ENCODE measurements at regions of chr16 and their contacts with region 1.

Region 1: GRCh38 chr16:58629572-58630104 is at the start of gene CNOT1:
- DNase-seq: peak; percentile 92 to 99 (median 97)
- ATAC-seq: peak; percentile 84 to 89 (median 86)
- H3K4me3 ChIP-seq: peak within 1 kb of the TSS; percentile 89 to 97
- H3K4me3 Mint-ChIP-seq: peak within 1 kb of the TSS; percentile 97 to 100 (median 100)
- H3K27ac ChIP-seq: peak within 1 kb of the TSS; percentile 93
- H3K27ac Mint-ChIP-seq: peak within 1 kb of the TSS; percentile 100
- H3K4me1 ChIP-seq: peaks cover 15 to 41% of the 10 kb centered on the region in 2 experiments
- H3K4me1 Mint-ChIP-seq: peaks cover 35 to 38% (median 36%) of the 10 kb centered on the region in 3 donors
- H3K27me3 ChIP-seq: no peaks in the 10 kb centered on the region
- H3K27me3 Mint-ChIP-seq: no peaks in the 10 kb centered on the region
- total RNA-seq, gene CNOT1: 205 to 238 (median 222) TPM

Region 2: GRCh38 chr16:58515125-58515870 is 114.3 kb before region 1 on chr16 and contains the start of gene SETD6:
- CTCF ChIA-PET with region 1: interaction called in 1 of 2 experiments, 11 read pairs
- POLR2A ChIA-PET with region 1: no interaction called
- DNase-seq: peak in 30 of 35 experiments; percentile 26 to 73 (median 50)
- ATAC-seq: peak; percentile 71 to 81 (median 78)
- H3K4me3 ChIP-seq: peak within 1 kb of the TSS; percentile 83 to 87
- H3K4me3 Mint-ChIP-seq: peak within 1 kb of the TSS; percentile 87 to 92 (median 89)
- H3K27ac ChIP-seq: peak within 1 kb of the TSS; percentile 53
- H3K27ac Mint-ChIP-seq: peak within 1 kb of the TSS; percentile 89 to 91
- H3K4me1 ChIP-seq: peaks cover 4 to 22% of the 10 kb centered on the region in 2 experiments
- H3K4me1 Mint-ChIP-seq: peaks cover 19 to 34% (median 29%) of the 10 kb centered on the region in 3 donors
- H3K27me3 ChIP-seq: peaks cover 0 to 2% of the 10 kb centered on the region in 2 experiments
- H3K27me3 Mint-ChIP-seq: no peaks in the 10 kb centered on the region
- total RNA-seq, gene SETD6: 29.6 to 44.2 (median 35.1) TPM

Region 3: GRCh38 chr16:58670177-58670576 is 40.5 kb after region 1 on chr16:
- CTCF ChIA-PET with region 1: no interaction called
- POLR2A ChIA-PET with region 1: no interaction called
- DNase-seq: no peak
- ATAC-seq: no peak
- H3K4me3 ChIP-seq: no peak overlapping the region
- H3K4me3 Mint-ChIP-seq: no peak overlapping the region
- H3K27ac ChIP-seq: no peak overlapping the region
- H3K27ac Mint-ChIP-seq: no peak overlapping the region
- H3K4me1 ChIP-seq: no peaks in the 10 kb centered on the region
- H3K4me1 Mint-ChIP-seq: no peaks in the 10 kb centered on the region
- H3K27me3 ChIP-seq: no peaks in the 10 kb centered on the region
- H3K27me3 Mint-ChIP-seq: no peaks in the 10 kb centered on the region

Region 4: DNA sequence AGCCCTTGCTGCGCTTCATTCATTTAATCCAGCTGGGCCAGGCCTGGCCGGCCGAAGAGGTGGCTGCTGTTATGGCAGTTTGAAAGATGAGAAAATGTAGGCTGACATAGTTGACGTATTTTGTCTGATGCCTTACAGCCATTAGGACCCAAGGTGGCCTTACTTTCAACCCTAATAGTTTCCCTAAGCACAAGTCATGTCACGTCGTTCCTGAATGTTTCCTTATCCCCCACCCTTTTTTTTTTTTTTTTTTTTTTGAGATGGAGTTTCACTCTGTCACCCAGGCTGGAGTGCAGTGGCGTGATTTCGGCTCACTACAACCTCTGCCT is 104.8 kb after region 1 on chr16:
- CTCF ChIA-PET with region 1: no interaction called
- POLR2A ChIA-PET with region 1: interaction called in 1 of 2 experiments, 12 read pairs
- DNase-seq: no peak
- ATAC-seq: peak in 1 of 4 experiments; percentile 18
- H3K4me3 ChIP-seq: peak overlapping the region; percentile 84 to 92
- H3K4me3 Mint-ChIP-seq: peak overlapping the region; percentile 94 to 98 (median 95)
- H3K27ac ChIP-seq: peak overlapping the region; percentile 57
- H3K27ac Mint-ChIP-seq: peak overlapping the region; percentile 23 to 90
- H3K4me1 ChIP-seq: peaks cover 3 to 20% of the 10 kb centered on the region in 2 experiments
- H3K4me1 Mint-ChIP-seq: peaks cover 33 to 43% (median 38%) of the 10 kb centered on the region in 3 donors
- H3K27me3 ChIP-seq: no peaks in the 10 kb centered on the region
- H3K27me3 Mint-ChIP-seq: peaks cover 0 to 2% of the 10 kb centered on the region in 2 donors

Region 5: GRCh38 chr16:59047114-59047513 is 417.5 kb after region 1 on chr16:
- CTCF ChIA-PET with region 1: no interaction called
- POLR2A ChIA-PET with region 1: no interaction called
- DNase-seq: no peak
- ATAC-seq: no peak
- H3K4me3 ChIP-seq: no peak overlapping the region
- H3K4me3 Mint-ChIP-seq: no peak overlapping the region
- H3K27ac ChIP-seq: no peak overlapping the region
- H3K27ac Mint-ChIP-seq: no peak overlapping the region
- H3K4me1 ChIP-seq: no peaks in the 10 kb centered on the region
- H3K4me1 Mint-ChIP-seq: no peaks in the 10 kb centered on the region
- H3K27me3 ChIP-seq: no peaks in the 10 kb centered on the region
- H3K27me3 Mint-ChIP-seq: no peaks in the 10 kb centered on the region